Naive thymus-derived CD4-positive, alpha-beta T cell (primary cell): ENCODE measurements at regions of chr1 and their contacts with region 1.

Region 1: GRCh38 chr1:34865981-34866761 is 6.6 kb upstream of the SMIM12 start:
- DNase-seq: peak; percentile 87 to 97 (median 90)
- ATAC-seq: peak; percentile 92
- H3K4me3 ChIP-seq: peak overlapping the region; percentile 66
- H3K4me3 Mint-ChIP-seq: peak overlapping the region; percentile 82 to 92 (median 86)
- H3K27ac ChIP-seq: peak overlapping the region; percentile 83
- H3K27ac Mint-ChIP-seq: peak overlapping the region; percentile 80 to 92 (median 88)
- H3K4me1 ChIP-seq: peaks cover 19 to 22% of the 10 kb centered on the region in 2 donors
- H3K4me1 Mint-ChIP-seq: peaks cover 28 to 54% (median 44%) of the 10 kb centered on the region in 7 donors
- H3K27me3 ChIP-seq: no peaks in the 10 kb centered on the region
- H3K27me3 Mint-ChIP-seq: peaks cover 0 to 6% (median under 1%) of the 10 kb centered on the region in 5 donors

Region 2: DNA sequence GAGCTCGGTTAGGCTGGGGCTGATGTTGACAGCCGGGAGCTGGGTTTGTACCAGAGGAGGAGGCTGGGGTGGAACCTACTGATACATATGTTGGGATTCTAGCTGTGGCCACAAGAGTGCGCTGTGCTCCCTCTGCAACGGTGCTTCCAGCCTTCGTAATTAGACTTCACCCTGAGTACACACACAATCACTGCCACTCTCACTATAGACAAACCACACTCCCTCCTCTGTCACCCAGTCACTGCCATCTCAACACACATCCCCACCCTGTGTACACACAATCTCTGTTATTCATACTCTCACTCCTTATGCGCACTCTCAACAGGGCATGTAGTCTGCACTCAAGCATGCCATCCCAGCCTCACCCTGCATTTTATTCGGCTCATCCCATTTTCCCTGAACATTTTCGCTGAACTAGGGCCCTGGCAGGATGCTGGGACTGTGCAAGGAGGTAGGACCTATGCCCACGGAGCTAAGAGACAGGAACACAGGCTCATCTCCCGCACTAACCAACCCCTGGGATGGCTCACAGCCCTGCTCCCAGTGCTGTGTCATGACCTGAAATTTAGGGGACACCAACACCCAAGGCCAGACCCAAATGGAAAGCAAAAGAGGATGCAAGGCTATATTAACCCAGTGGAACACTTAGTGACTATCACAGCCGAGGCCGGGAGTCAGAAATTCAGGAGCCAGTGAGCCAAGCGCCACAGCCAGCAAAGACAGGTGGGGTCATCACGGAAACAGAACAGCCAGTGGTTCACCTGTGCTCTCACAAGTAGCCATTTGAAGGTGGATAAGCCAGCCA is 79.4 kb before region 1 on chr1:
- CTCF ChIA-PET with region 1: interaction called, 5 read pairs
- POLR2A ChIA-PET with region 1: no interaction called
- intact Hi-C with region 1: loop called in 1 of 2 experiments (anchors 1 kb)
- DNase-seq: peak; percentile 28 to 59 (median 47)
- ATAC-seq: peak; percentile 88
- H3K4me3 ChIP-seq: no peak overlapping the region
- H3K4me3 Mint-ChIP-seq: no peak overlapping the region
- H3K27ac ChIP-seq: no peak overlapping the region
- H3K27ac Mint-ChIP-seq: no peak overlapping the region
- H3K4me1 ChIP-seq: no peaks in the 10 kb centered on the region
- H3K4me1 Mint-ChIP-seq: peaks cover 0 to 14% (median 3%) of the 10 kb centered on the region in 7 donors
- H3K27me3 ChIP-seq: no peaks in the 10 kb centered on the region
- H3K27me3 Mint-ChIP-seq: peaks cover 19 to 54% (median 43%) of the 10 kb centered on the region in 5 donors